ENCODE measurements at regions of chr3 and their contacts with region 1.

Region 1: GRCh38 chr3:32374788-32375595 is 16.7 kb upstream of the CMTM7 start:
- DNase-seq: peak; percentile 77
- ATAC-seq: peak; percentile 64
- H3K4me3 Mint-ChIP-seq: no peak overlapping the region
- H3K27ac Mint-ChIP-seq: peak overlapping the region; percentile 35
- H3K4me1 Mint-ChIP-seq: peaks cover 35% of the 10 kb centered on the region
- H3K27me3 Mint-ChIP-seq: no peaks in the 10 kb centered on the region

Region 2: GRCh38 chr3:32401556-32402081 is 26.6 kb after region 1 on chr3:
- CTCF ChIA-PET with region 1: interaction called, 42 read pairs
- POLR2A ChIA-PET with region 1: no interaction called
- intact Hi-C with region 1: loop called (anchors 1 kb)
- DNase-seq: peak; percentile 79
- ATAC-seq: peak; percentile 78
- H3K4me3 Mint-ChIP-seq: peak overlapping the region; percentile 90
- H3K27ac Mint-ChIP-seq: peak overlapping the region; percentile 100
- H3K4me1 Mint-ChIP-seq: peaks cover 71% of the 10 kb centered on the region
- H3K27me3 Mint-ChIP-seq: no peaks in the 10 kb centered on the region

Region 3: DNA sequence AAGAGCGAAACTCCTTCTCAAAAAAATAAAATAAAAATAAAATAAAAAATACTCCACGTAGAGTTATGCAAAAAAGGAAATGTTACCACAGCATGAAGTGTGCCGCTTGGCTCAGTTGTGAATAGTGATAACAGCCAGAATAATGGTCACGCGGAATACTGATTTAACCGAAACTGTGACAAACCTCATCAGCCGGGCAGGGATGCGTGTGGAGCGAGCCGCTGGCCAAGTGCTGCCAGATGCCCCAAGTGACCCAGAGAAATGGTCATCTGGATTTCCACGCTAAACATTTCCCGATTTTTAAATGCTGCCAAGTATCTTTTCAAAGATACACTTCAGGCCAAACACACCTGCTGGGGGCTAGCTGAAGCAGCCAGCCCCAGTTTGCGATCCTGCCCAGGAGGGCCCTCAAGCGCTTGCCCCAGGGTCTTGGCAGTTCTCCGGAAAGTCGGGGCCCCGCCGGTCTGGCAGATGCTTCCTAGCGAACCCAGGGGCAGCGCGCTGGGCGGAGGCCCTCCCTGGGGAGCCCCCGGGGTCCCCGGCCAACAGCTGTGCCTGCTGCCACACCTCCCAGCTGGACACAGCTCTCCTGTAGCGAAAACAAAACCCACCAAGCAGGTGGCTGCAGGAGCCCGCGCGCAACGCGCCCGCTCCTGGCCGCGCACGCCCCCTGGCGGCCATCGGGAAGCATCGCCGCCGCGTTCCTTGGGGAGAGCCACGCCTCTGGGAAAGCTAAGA is 92.5 kb after region 1 on chr3:
- CTCF ChIA-PET with region 1: interaction called, 88 read pairs
- POLR2A ChIA-PET with region 1: interaction called, 3 read pairs
- intact Hi-C with region 1: loop called (anchors 1 kb)
- DNase-seq: peak; percentile 84
- ATAC-seq: peak; percentile 77
- H3K4me3 Mint-ChIP-seq: no peak overlapping the region
- H3K27ac Mint-ChIP-seq: no peak overlapping the region
- H3K4me1 Mint-ChIP-seq: peaks cover 45% of the 10 kb centered on the region
- H3K27me3 Mint-ChIP-seq: no peaks in the 10 kb centered on the region

Region 4: GRCh38 chr3:32502118-32502945 is 127.3 kb after region 1 on chr3 and contains the start of gene CMTM6:
- CTCF ChIA-PET with region 1: interaction called, 14 read pairs
- POLR2A ChIA-PET with region 1: no interaction called
- intact Hi-C with region 1: no loop called
- DNase-seq: peak; percentile 87
- ATAC-seq: peak; percentile 80
- H3K4me3 Mint-ChIP-seq: peak within 1 kb of the TSS; percentile 86
- H3K27ac Mint-ChIP-seq: peak within 1 kb of the TSS; percentile 95
- H3K4me1 Mint-ChIP-seq: peaks cover 29% of the 10 kb centered on the region
- H3K27me3 Mint-ChIP-seq: no peaks in the 10 kb centered on the region
- total RNA-seq, gene CMTM6: 33.6 to 48.0 TPM

Region 5: DNA sequence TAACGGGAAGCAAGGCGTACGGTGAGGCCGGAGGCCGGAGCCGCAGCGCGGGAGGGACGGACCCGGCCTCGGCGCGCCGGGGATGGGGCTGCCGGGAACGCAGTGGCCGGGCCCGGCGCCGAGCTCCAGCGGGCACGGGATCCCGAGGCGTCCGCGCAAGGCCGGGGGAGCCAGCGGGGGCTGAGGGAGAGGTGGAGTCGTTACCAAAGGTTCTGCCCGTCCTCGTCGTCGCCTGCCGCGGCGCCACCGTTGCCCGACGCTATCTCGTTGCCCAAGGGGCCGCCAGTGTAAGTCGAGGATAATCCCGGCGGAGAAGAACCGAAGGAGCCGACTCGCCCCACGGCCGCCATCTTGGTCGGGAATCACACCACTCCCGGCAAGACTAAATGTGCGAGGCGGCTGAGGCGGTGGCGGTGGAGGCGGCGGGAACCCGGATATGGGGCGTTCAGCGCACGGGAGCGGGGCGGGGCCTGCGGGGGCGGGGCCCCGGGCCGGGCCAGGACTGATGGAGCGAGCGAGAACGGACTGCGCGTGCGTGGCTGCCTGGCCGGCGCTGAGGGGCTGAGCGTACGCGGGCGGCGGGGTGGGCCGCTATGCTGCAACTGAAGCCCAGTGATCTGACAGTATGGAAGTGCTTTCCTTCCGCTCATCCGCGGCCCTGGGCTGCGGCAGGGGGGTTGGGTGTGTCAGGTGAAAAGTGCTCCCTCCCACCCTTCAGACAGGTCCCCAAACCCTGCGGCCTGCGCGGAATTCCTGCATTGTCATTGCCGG is 195.6 kb after region 1 on chr3 and contains the start of gene DYNC1LI1:
- CTCF ChIA-PET with region 1: interaction called, 3 read pairs
- POLR2A ChIA-PET with region 1: no interaction called
- intact Hi-C with region 1: loop called in 1 of 2 experiments (anchors 5 kb)
- DNase-seq: peak; percentile 96
- ATAC-seq: peak; percentile 96
- H3K4me3 Mint-ChIP-seq: peak within 1 kb of the TSS; percentile 78
- H3K27ac Mint-ChIP-seq: peak within 1 kb of the TSS; percentile 90
- H3K4me1 Mint-ChIP-seq: peaks cover 28% of the 10 kb centered on the region
- H3K27me3 Mint-ChIP-seq: no peaks in the 10 kb centered on the region
- total RNA-seq, gene DYNC1LI1: 31.8 to 31.9 TPM